Endothelial cell of umbilical vein (primary cell): ENCODE measurements at regions of chr16 and their contacts with region 1.

Region 1: DNA sequence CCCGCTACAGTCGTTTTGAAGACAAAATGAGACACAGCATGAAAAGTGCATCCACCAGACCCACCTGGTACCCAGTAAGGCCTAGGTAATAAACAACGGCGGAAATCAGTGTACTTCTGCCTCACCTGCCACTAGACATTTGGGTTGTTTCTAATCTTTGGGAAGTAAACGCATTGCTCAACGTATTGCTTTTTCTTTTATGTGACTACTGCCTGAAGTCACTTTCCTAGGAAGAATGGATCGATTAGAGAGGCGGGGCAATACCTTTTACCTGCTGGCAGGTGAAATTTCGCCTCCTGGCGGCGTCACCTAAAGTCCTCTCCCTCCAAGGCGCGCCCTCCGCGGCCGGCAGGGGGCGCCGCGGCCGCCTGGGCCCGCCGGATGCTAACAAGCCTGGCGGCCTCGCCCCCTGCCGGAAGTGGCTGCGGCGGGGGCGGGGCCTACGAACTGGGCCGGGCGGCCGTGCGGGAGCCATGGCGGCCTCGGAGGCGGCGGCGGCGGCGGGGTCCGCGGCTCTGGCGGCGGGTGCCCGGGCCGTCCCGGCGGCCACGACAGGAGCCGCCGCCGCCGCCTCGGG is at the start of gene ATMIN:
- DNase-seq: peak; percentile 77
- H3K4me3 ChIP-seq: peak within 1 kb of the TSS; percentile 61 to 69 (median 69)
- H3K27ac ChIP-seq: peak within 1 kb of the TSS; percentile 61
- H3K4me1 ChIP-seq: peaks cover 11% of the 10 kb centered on the region
- H3K27me3 ChIP-seq: no peaks in the 10 kb centered on the region
- CTCF ChIP-seq: peak; percentile 89 to 96
- POLR2A ChIP-seq: no peak
- total RNA-seq, gene ATMIN: 22.4 and 25.3 TPM in 2 replicates

Region 2: DNA sequence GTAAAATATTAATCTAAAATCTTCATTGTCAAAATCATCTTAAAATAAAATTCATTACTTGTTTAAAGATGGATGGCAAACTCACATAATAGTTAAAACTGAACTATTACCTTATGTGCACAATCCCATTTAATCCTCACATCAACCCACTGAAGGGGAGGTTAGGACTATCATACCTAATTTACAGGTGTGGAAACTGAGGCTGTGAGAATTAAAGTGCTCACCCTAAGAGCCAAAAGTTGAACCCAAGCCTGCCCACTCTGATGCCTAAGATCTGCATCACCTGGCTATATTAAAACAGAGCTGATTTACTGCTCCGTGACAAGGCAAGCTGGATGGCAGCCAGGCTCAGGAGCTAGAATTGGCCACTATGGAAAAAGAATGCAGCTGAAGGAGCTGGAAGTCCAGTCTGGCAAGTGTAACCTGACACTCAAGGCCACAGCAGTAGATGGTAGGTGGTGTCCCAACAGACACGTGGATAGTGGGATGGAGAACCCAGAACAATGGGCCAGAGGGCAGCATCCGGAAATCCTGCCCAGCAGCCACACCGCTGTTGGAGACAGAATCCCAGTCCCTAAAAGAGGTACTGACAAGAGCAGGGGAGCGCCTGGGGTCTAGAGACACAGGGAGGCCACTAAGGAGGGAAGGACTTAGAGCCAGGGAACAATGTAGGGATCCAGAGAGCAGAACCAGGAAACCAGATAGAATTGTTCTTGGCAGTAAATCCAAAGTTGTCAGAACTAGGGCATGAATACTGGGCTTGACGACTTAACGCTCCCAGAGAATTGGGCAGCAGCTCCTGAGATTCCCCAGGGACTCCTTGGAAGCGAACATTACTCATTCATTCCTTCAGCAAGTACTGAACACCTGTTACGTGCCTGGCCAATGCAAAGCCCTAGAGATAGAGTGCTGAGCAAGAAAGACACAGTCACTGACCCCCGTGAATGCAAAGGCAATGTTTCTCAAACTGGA is 317.0 kb before region 1 on chr16:
- CTCF ChIA-PET with region 1: no interaction called
- POLR2A ChIA-PET with region 1: no interaction called
- dilution Hi-C with region 1: no loop called
- intact Hi-C with region 1: no loop called
- DNase-seq: peak; percentile 91
- H3K4me3 ChIP-seq: no peak overlapping the region
- H3K27ac ChIP-seq: peak overlapping the region; percentile 51
- H3K4me1 ChIP-seq: peaks cover 32% of the 10 kb centered on the region
- H3K27me3 ChIP-seq: no peaks in the 10 kb centered on the region
- CTCF ChIP-seq: no peak
- POLR2A ChIP-seq: no peak

Region 3: DNA sequence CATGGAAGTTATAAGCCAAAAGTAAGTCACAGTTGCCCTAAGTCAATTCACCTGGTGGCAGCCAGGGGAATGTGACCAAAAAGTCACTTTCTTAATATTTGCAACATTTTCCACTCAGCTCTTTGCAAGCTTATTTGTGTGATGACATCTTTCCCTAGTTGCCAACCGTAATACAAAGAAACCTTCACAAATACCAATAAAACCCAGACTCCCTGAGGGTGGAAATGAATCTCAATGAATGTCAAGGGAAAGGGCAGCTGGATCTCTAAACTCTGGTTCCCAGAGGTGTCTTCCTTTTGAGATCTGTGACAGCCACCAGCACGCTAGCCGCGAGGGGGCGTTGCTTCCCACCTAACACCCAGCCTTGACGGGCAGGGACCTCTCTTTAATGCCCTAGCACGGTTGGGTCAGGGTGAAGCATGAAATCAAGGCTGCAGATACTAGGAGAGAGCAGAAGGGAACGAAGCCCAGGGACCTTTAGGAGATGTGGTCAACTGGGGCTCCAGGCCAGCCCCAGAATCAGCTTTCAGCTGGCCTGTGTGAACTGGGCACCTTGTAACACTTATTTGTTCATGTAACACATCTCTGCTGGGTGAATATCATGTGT is 111.0 kb before region 1 on chr16:
- CTCF ChIA-PET with region 1: interaction called, 36 read pairs
- POLR2A ChIA-PET with region 1: no interaction called
- dilution Hi-C with region 1: no loop called
- intact Hi-C with region 1: loop called (anchors 1 kb)
- DNase-seq: peak; percentile 80
- H3K4me3 ChIP-seq: no peak overlapping the region
- H3K27ac ChIP-seq: no peak overlapping the region
- H3K4me1 ChIP-seq: no peaks in the 10 kb centered on the region
- H3K27me3 ChIP-seq: no peaks in the 10 kb centered on the region
- CTCF ChIP-seq: peak; percentile 88 to 95
- POLR2A ChIP-seq: no peak

Region 4: GRCh38 chr16:81006814-81007696 is 28.4 kb before region 1 on chr16 and contains the starts of genes CENPN and CMC2:
- CTCF ChIA-PET with region 1: interaction called, 14 read pairs
- POLR2A ChIA-PET with region 1: no interaction called
- dilution Hi-C with region 1: no loop called
- intact Hi-C with region 1: loop called (anchors 1 kb)
- DNase-seq: peak; percentile 99
- H3K4me3 ChIP-seq: peak within 1 kb of the TSS; percentile 72 to 87 (median 83)
- H3K27ac ChIP-seq: peak within 1 kb of the TSS; percentile 80
- H3K4me1 ChIP-seq: peaks cover 19% of the 10 kb centered on the region
- H3K27me3 ChIP-seq: no peaks in the 10 kb centered on the region
- CTCF ChIP-seq: peak in 1 of 2 donors; percentile 1
- POLR2A ChIP-seq: peak; percentile 84
- total RNA-seq, gene CENPN: 52.4 and 53.4 TPM in 2 replicates
- total RNA-seq, gene CMC2: 96.6 and 97.8 TPM in 2 replicates

Region 5: GRCh38 chr16:81077076-81077940 is 41.8 kb after region 1 on chr16 and contains the start of gene C16orf46:
- CTCF ChIA-PET with region 1: interaction called, 25 read pairs
- POLR2A ChIA-PET with region 1: no interaction called
- dilution Hi-C with region 1: no loop called
- intact Hi-C with region 1: loop called (anchors 1 kb)
- DNase-seq: peak; percentile 97
- H3K4me3 ChIP-seq: peak within 1 kb of the TSS; percentile 48 to 52 (median 49)
- H3K27ac ChIP-seq: peak within 1 kb of the TSS; percentile 91
- H3K4me1 ChIP-seq: peaks cover 7% of the 10 kb centered on the region
- H3K27me3 ChIP-seq: no peaks in the 10 kb centered on the region
- CTCF ChIP-seq: no peak
- POLR2A ChIP-seq: peak; percentile 80
- total RNA-seq, gene C16orf46: 0.53 TPM in 1 of 2 replicates, not detected in the other

Region 6: DNA sequence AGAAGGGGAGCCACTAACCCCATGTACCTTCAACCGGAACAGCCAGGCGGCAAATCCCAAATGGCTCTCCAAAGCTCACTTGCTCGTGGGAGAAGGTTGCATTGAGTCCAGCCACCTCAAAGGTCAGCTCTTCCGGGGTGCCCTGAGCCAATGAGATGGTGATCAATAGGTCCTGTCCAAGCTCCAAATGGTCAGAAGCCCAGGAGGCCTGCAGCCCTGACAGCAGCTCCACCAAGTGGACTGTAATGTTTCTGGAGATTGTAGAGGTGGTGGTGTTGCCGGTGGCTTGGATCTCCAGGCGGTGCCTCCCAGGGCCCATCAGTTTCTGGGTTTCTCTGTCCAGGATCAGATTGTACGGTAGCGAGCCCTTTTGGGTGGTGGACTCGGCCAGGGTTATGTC is 163.1 kb after region 1 on chr16:
- CTCF ChIA-PET with region 1: interaction called, 4 read pairs
- POLR2A ChIA-PET with region 1: no interaction called
- dilution Hi-C with region 1: no loop called
- intact Hi-C with region 1: loop called (anchors 5 kb)
- DNase-seq: no peak
- H3K4me3 ChIP-seq: no peak overlapping the region
- H3K27ac ChIP-seq: no peak overlapping the region
- H3K4me1 ChIP-seq: no peaks in the 10 kb centered on the region
- H3K27me3 ChIP-seq: peaks cover 0 to 2% of the 10 kb centered on the region in 2 experiments
- CTCF ChIP-seq: no peak
- POLR2A ChIP-seq: no peak